Left cardiac atrium (tissue), 4 donors: ENCODE measurements at regions of chr16 and their contacts with region 1.

Region 1: GRCh38 chr16:25051406-25052150 is 36.4 kb upstream of the ARHGAP17 start:
- DNase-seq: no peak
- ATAC-seq: peak; percentile 35

Region 2: DNA sequence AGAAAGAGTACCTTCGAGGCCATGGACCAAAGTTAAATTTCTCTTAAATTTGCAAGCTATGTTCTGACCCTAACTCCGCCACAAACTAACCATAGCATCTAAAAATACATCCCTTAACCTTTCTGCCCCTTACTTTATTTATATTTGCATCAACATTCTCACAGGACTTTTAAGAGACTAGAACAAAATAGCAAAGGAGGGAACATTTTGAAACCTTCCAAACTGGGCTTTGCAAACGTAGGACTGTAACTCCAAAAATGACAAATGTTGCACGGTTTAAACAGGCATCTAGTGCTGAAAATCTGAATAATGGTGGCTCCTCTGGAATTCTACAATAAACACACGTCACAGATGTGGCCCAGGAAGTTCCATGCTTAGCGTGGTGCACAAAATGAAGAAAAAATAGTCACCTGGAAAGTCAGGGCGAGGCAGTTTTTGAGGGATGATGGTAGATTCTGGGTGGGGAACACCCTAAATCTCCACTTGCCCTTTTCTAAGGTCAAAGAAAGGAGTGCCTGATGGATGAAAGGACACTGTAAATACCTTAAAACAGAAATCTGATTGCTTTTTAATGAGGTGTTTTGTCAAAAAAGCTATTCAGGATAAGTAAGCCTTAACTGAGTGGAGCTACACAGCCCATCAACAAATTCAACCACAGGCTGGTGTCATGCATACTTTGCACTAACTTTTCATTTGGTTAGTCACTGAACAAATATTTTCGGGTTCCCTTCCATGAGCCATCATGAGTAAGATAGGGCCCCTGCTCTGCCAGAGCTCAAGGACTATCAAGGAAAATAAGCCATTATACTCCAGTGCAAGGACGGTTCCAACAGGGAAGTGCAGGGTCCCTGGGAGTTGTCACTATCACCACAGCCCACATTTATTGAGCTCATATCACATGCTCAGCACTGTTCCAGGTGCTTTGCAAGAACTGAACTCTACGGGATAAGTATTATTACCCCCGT is 57.6 kb before region 1 on chr16:
- intact Hi-C with region 1: no loop called
- DNase-seq: no peak
- ATAC-seq: peak; percentile 62 to 84

Region 3: DNA sequence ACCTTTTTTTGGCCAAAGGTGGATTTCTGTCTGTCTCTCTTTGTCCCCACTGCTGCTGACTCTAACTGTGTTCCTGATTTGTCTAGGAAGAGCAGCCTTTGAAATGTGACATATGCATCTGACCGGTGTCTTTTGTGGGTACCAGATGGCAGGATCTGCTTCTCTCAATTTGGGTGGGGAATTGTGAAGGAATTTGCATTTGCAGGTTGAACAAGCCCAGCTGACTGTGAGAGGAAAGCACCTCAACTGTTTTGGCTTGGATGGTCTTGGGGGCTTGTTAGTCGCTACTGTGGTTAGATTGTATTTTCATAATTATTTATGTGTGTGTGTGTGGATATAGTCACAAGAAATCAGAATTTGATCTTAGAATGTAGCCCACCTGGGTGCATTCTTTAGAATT is 22.3 kb after region 1 on chr16:
- intact Hi-C with region 1: no loop called
- DNase-seq: no peak
- ATAC-seq: no peak

Region 4: GRCh38 chr16:25126820-25127232 is 75.2 kb after region 1 on chr16:
- intact Hi-C with region 1: loop called (anchors 1 to 2 kb)
- DNase-seq: no peak
- ATAC-seq: peak; percentile 53 to 82